ENCODE measurements at regions of chr5 and their contacts with region 1.

Region 1: DNA sequence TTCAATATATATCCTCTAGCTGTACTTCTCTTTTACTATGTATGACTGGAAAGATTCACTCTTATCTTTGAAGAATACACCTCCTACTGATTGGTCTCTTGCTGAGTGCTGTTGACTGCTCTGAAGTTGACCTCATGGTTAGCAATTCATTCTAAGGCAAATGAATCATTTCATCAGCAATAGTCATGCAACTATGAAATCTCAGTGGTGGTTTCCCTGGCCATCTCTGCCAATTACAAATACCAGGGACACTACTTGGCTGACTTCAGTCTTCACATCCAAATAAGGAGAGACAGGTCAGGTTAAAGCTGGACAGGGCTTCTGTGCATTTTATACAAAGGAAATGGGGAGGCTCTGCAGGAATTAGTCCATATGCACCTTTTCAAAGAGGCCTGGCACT is 333.5 kb upstream of the ACTBL2 start:
- DNase-seq: no peak
- ATAC-seq: no peak
- H3K4me3 ChIP-seq: no peak overlapping the region
- H3K27ac ChIP-seq: no peak overlapping the region
- H3K4me1 ChIP-seq: no peaks in the 10 kb centered on the region
- H3K27me3 ChIP-seq: no peaks in the 10 kb centered on the region
- CTCF ChIP-seq: no peak
- EP300 ChIP-seq: no peak
- POLR2A ChIP-seq: no peak
- RAD21 ChIP-seq: no peak

Region 2: DNA sequence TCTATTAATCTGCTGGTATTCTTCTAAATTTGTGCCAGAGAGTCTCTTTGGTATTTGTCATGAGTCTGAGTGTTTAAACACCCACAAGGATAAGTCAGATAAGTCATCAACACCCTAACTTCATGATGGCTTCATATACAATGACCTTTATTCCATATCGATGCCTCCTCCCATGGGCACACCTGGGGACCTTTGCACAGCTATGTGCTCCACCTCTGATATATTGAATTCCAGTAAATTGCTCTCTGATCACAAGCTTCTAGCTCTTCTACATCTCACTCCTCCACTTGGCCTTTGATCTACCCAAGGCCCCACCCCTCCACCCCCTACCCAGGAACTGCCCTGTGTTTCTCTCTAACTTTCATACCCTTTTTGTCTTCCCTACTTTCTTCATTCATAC is 761.4 kb before region 1 on chr5:
- CTCF ChIA-PET with region 1: no interaction called
- POLR2A ChIA-PET with region 1: no interaction called
- in situ Hi-C with region 1: no loop called
- intact Hi-C with region 1: no loop called
- DNase-seq: no peak
- ATAC-seq: no peak
- H3K4me3 ChIP-seq: no peak overlapping the region
- H3K27ac ChIP-seq: no peak overlapping the region
- H3K4me1 ChIP-seq: peaks cover 8% of the 10 kb centered on the region
- H3K27me3 ChIP-seq: no peaks in the 10 kb centered on the region
- CTCF ChIP-seq: no peak
- EP300 ChIP-seq: no peak
- POLR2A ChIP-seq: no peak
- RAD21 ChIP-seq: no peak

Region 3: DNA sequence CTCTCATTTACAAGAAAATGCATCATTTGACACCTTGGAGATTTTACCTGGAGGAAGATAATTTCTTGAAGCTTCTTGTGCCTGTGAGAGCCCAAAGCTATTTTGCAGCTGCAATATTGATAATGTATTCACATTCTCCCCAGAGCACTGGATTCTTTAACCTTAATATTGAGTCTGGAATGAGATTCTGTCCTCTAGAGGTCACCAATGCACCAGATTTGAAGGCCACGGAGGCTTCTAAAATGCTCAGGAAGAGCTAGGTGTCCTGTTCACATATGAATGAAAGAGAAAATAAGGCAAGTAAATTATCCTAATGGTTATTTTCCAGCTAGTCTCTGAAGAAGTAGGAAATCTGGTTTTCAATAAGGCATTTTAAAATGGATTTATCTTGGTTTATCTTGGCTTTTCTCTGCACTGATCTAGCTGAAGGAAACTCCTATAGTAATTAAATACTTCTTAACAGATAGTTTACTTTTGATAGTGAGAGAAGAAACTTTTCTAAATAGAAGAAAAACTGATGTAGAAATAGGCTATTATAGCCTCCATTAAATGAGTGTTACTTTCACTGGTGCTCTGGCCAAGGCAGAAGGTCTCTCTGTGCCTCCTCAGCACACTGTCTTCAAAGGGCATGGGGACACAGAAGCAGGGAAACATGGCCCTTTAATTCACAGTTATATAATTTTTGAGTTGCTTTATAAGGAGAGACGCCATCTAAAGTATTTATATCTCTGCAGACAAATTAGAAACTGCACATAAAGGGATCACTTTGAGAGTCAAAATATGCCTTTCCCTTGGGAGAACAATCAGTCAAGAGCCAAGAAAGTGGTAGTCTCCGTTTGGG is 36.5 kb before region 1 on chr5:
- CTCF ChIA-PET with region 1: no interaction called
- POLR2A ChIA-PET with region 1: no interaction called
- in situ Hi-C with region 1: no loop called
- intact Hi-C with region 1: no loop called
- DNase-seq: peak; percentile 49
- ATAC-seq: peak; percentile 83
- H3K4me3 ChIP-seq: no peak overlapping the region
- H3K27ac ChIP-seq: no peak overlapping the region
- H3K4me1 ChIP-seq: peaks cover 31% of the 10 kb centered on the region
- H3K27me3 ChIP-seq: no peaks in the 10 kb centered on the region
- CTCF ChIP-seq: peak; percentile 66
- EP300 ChIP-seq: no peak
- POLR2A ChIP-seq: no peak
- RAD21 ChIP-seq: peak; percentile 38; the same call in 1 of the 2 replicates

Region 4: DNA sequence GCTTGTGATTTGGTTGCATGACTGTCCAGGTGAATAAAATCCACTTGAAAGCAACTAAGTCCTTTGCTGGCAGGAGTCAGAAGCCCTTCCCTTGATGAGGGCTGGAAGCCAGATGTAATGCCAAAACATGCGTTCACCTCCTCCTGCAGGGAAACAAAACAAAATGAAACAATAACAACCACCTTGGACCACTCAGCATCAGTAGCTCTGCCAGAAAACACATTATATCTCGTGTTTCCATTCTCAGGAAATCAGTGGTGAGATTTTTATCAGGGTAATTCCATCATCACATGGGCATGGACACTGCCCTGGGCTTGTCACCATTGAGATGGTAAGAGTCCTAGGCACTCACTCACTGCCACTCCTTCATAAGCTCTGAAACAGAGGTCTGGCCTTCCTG is 16.8 kb after region 1 on chr5:
- CTCF ChIA-PET with region 1: no interaction called
- POLR2A ChIA-PET with region 1: no interaction called
- in situ Hi-C with region 1: no loop called
- intact Hi-C with region 1: loop called (anchors 2 kb)
- DNase-seq: no peak
- ATAC-seq: no peak
- H3K4me3 ChIP-seq: no peak overlapping the region
- H3K27ac ChIP-seq: no peak overlapping the region
- H3K4me1 ChIP-seq: peaks cover 10% of the 10 kb centered on the region; the same call in 1 of the 2 replicates
- H3K27me3 ChIP-seq: no peaks in the 10 kb centered on the region
- CTCF ChIP-seq: no peak
- EP300 ChIP-seq: no peak
- POLR2A ChIP-seq: no peak
- RAD21 ChIP-seq: no peak